ENCODE measurements at regions of chr19 and their contacts with region 1.

Region 1: DNA sequence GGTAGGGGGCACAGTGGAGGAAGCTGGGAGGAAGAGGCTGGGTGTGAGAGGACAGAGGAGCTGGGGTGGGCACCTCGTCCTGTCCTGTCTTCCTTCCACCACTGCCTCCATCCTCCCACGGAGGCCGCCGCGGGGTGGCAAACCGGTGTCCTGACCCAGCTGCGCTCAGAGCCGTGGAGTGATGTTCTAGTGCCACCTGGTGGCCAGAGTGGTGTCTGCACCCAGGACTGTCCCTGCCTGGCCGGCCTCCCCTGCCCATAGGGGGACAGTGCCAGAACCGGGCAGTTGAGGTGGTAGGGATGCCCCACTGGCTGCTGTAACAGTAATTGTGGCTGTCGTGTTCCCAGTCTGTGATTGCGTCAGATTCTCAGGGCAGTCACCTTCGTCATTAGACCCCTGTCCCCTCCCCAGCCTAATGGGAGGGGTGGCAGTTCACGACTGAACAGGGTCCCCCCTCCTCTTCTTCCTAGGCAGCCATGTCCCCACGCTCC is 11.1 kb upstream of the ARRDC2 start:
- DNase-seq: peak; percentile 91
- ATAC-seq: peak; percentile 83
- H3K4me3 ChIP-seq: no peak overlapping the region
- H3K27ac ChIP-seq: no peak overlapping the region
- H3K4me1 ChIP-seq: peaks cover 9% of the 10 kb centered on the region
- H3K27me3 ChIP-seq: no peaks in the 10 kb centered on the region
- CTCF ChIP-seq: peak; percentile 97

Region 2: GRCh38 chr19:17873786-17874757 is 122.8 kb before region 1 on chr19:
- intact Hi-C with region 1: loop called (anchors 10 kb)
- DNase-seq: peak; percentile 77
- ATAC-seq: peak; percentile 79
- H3K4me3 ChIP-seq: peak overlapping the region; percentile 21
- H3K27ac ChIP-seq: no peak overlapping the region
- H3K4me1 ChIP-seq: peaks cover 16% of the 10 kb centered on the region
- H3K27me3 ChIP-seq: peaks cover 47% of the 10 kb centered on the region
- CTCF ChIP-seq: no peak

Region 3: GRCh38 chr19:17938092-17938845 is 58.6 kb before region 1 on chr19:
- intact Hi-C with region 1: loop called (anchors 5 kb)
- DNase-seq: peak; percentile 89
- ATAC-seq: peak; percentile 92
- H3K4me3 ChIP-seq: no peak overlapping the region
- H3K27ac ChIP-seq: no peak overlapping the region
- H3K4me1 ChIP-seq: peaks cover 10% of the 10 kb centered on the region
- H3K27me3 ChIP-seq: no peaks in the 10 kb centered on the region
- CTCF ChIP-seq: peak; percentile 92

Region 4: DNA sequence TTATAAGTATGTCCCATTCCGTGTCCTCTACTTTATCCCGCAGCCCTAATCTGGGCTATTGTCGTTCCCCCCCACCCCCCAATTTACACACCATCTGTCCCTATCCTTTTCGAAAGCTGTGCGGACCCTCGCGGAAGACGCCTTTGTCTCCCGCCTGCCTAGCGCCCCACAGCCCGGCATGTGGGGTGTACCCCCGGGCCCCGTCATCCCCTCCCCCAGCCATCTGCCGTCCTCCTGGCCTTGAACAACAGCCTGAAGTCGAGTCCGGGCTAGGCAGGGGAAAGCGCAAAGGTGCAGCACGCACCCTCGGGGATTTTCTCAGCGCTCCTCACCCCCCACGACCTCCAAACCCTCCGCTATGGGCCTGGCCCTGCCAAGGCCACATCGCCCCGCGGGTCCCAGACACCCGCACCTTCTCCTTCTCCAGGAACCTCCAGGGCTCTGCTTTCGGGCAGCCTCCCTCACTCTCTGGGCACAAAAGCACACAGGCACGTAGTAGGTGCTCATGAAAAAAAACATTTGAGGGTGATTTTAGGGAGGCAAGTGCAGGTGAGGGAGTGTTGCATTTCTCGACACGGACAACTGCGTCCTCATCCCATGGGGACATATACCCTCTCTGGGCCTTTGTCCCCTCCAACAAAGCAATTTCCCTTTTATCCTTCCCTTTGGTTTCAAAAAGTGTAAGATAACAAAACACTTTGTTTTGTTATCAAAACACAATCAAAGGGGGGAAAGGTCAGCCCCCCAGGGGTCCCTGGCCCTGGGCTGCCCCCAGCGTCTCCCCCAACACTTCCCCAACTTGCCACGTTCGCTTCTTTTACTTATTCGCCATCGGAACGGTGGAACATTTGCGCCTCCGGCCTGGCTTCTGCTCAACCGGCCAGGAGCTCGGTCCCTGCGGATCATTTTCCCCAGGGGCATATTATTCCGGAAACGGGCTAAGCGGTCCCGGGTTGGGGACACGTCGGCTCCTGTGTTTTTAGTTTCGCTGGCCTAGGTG is 47.6 kb before region 1 on chr19:
- intact Hi-C with region 1: no loop called
- DNase-seq: no peak
- ATAC-seq: no peak
- H3K4me3 ChIP-seq: no peak overlapping the region
- H3K27ac ChIP-seq: no peak overlapping the region
- H3K4me1 ChIP-seq: peaks cover 33% of the 10 kb centered on the region
- H3K27me3 ChIP-seq: peaks cover 51% of the 10 kb centered on the region
- CTCF ChIP-seq: no peak